Heart right ventricle (tissue), 16 donors: ENCODE measurements at regions of chr15 and their contacts with region 1.

Region 1: DNA sequence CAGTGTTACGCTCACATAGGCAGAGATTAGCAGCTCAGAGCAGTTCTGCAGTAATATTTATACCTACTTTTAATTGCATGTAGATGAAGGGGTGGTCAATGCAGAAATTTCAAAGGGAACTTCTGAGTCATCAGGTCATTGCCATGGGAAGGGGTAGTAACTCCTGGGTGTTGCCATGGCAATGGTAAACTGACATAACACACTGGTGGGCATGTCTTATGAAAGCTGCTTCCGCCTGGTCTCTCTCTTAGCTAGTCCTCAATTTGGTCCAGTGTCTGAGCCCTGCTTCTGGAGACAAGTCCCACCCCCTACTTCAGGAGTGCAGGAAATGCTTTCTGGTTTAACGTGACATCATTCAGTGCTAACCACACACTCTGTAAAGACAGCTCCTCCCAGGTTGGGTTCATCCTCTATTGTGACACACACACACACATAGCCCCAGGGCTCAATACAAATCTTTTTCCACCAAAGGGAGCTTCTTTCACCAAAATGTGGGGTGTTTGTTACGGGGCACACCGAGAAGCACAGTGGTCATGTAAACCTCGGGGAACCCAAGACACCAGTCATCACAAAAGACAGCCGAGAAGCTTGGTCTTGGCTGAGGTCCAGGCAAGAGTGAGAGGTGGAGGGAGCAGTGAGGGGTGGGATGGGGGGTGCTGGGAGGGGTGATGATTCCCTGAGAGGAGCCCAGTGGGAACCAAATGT is 74.5 kb downstream of the TLE3 start:
- DNase-seq: no peak
- ATAC-seq: peak in 5 of 8 donors; percentile 26 to 55 (median 46)
- H3K4me3 ChIP-seq: no peak overlapping the region
- H3K27ac ChIP-seq: peak overlapping the region in 2 of 10 donors; percentile 19 to 30
- H3K4me1 ChIP-seq: peaks cover 9 to 31% (median 22%) of the 10 kb centered on the region in 9 donors
- H3K27me3 ChIP-seq: peaks cover 0 to 35% (median 9%) of the 10 kb centered on the region in 7 donors
- CTCF ChIP-seq: no peak

Region 2: DNA sequence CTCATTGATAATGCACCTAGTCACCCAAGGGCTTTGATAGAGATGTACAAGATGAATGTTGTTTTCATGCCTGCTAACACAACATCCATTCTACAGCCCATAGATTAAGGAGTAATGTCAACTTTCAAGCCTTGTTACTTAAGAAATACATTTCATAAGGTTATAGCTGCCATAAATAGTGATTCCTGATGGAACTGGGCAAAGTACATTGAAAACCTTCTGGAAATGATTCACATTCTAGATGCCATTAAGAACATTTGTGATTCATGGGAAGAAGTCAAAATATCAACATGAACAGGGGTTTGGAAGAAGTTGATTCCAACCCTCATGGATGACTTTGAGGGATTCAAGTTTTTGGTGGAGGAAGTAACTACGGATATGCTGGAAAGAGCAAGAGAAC is 60.7 kb before region 1 on chr15:
- intact Hi-C with region 1: loop called in 1 of 10 experiments (anchors 10 kb)
- DNase-seq: no peak
- ATAC-seq: no peak
- H3K4me3 ChIP-seq: no peak overlapping the region
- H3K27ac ChIP-seq: no peak overlapping the region
- H3K4me1 ChIP-seq: no peaks in the 10 kb centered on the region
- H3K27me3 ChIP-seq: peaks cover 0 to 11% (median 0%) of the 10 kb centered on the region in 7 donors
- CTCF ChIP-seq: no peak

Region 3: DNA sequence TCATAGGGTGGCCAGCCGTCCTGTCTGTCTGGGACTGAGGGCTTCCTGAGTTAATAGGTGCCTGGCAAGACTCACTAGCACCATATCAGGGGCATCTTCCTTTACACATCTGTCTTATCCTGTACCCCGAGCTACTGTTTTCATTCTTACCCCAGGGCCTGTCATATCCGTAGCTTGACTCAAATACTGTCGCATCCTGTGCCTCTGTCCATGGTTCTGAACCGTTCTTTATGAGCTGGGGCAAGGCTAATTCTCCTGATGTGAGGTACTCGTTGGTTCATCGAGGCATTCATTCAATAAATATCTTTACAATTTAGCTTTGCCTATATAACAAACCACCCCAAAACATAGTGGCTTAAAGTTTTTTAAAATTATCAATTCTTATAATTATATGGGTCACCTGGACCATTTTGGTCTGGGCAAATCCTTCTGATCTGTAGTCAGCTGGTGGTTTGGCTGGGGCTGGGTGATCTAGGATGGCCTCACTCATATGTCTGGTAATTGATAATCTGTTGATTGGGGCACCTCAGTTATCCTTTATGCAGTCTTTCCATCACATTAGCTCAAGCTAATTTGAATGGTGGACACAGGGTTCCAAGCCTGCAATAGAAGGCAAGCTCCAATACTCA is 46.7 kb before region 1 on chr15:
- intact Hi-C with region 1: no loop called
- DNase-seq: peak in 1 of 2 donors; percentile 41
- ATAC-seq: peak in 2 of 8 donors; percentile 42 to 48
- H3K4me3 ChIP-seq: no peak overlapping the region
- H3K27ac ChIP-seq: no peak overlapping the region
- H3K4me1 ChIP-seq: no peaks in the 10 kb centered on the region
- H3K27me3 ChIP-seq: peaks cover 0 to 46% (median 29%) of the 10 kb centered on the region in 7 donors
- CTCF ChIP-seq: no peak

Region 4: GRCh38 chr15:70008697-70009290 is 14.4 kb before region 1 on chr15:
- intact Hi-C with region 1: no loop called
- DNase-seq: no peak
- ATAC-seq: no peak
- H3K4me3 ChIP-seq: no peak overlapping the region
- H3K27ac ChIP-seq: no peak overlapping the region
- H3K4me1 ChIP-seq: no peaks in the 10 kb centered on the region
- H3K27me3 ChIP-seq: peaks cover 0 to 55% (median 17%) of the 10 kb centered on the region in 7 donors
- CTCF ChIP-seq: no peak